A549 (cell line): ENCODE measurements at regions of chr17 and their contacts with region 1.

Region 1: GRCh38 chr17:39547713-39548478 is 59.8 kb downstream of the NEUROD2 start:
- DNase-seq: peak; percentile 69 to 75
- ATAC-seq: peak; percentile 91 to 92
- H3K4me3 ChIP-seq: no peak overlapping the region
- H3K27ac ChIP-seq: no peak overlapping the region
- H3K4me1 ChIP-seq: no peaks in the 10 kb centered on the region
- CTCF ChIP-seq: peak; percentile 99
- EP300 ChIP-seq: no peak
- POLR2A ChIP-seq: no peak
- RAD21 ChIP-seq: peak; percentile 87 to 88

Region 2: GRCh38 chr17:39209317-39210092 is 338.4 kb before region 1 on chr17:
- CTCF ChIA-PET with region 1: interaction called, 17 read pairs
- POLR2A ChIA-PET with region 1: no interaction called
- DNase-seq: no peak
- ATAC-seq: no peak
- H3K4me3 ChIP-seq: peak overlapping the region; percentile 25; the same call in 2 of the 3 replicates
- H3K27ac ChIP-seq: peak overlapping the region; percentile 64 to 73; a peak in 4 of 6 replicates
- H3K4me1 ChIP-seq: peaks cover 34% of the 10 kb centered on the region
- CTCF ChIP-seq: no peak
- EP300 ChIP-seq: no peak
- POLR2A ChIP-seq: no peak
- RAD21 ChIP-seq: no peak

Region 3: DNA sequence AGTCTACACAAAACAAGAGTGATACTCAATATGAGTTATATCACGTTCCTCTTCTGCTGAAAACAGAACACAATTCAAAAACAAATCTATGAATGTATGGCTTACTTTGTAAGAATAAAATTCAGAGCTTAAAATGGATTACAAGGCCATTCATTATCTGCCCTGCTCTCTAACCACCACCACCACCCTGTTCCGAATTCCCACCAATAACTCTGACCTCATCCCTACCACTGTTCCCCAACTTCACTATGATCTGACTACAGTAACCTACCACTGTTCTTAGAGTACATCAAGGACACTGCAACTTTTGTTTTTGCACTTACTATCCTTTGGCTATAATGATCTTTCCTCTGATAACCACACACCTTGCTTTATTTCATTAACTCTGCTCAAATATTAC is 167.8 kb before region 1 on chr17:
- CTCF ChIA-PET with region 1: no interaction called
- POLR2A ChIA-PET with region 1: no interaction called
- DNase-seq: no peak
- ATAC-seq: no peak
- H3K4me3 ChIP-seq: no peak overlapping the region
- H3K27ac ChIP-seq: no peak overlapping the region
- H3K4me1 ChIP-seq: no peaks in the 10 kb centered on the region; the same call in 2 of the 3 replicates
- CTCF ChIP-seq: no peak
- EP300 ChIP-seq: no peak
- POLR2A ChIP-seq: no peak
- RAD21 ChIP-seq: no peak

Region 4: DNA sequence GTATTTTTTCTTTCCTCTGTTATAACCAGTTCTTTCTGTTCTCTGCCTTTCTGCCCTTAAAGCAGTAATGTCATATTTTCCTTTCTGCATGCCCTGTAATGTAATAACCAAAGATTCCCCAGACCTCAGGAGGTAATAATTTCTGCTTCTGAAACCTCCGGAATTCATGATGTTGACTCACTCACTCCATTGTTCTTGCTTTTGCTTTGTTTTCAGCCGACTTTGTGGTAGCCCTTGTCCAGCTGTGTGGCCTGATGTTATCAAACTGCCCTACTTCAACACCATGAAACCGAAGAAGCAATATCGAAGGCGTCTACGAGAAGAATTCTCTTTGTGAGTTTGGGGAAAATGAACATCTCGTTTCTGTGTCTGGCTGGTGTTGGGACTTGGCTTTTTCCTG is 30.7 kb before region 1 on chr17:
- CTCF ChIA-PET with region 1: interaction called, 13 read pairs
- POLR2A ChIA-PET with region 1: no interaction called
- DNase-seq: no peak
- ATAC-seq: no peak
- H3K4me3 ChIP-seq: no peak overlapping the region
- H3K27ac ChIP-seq: no peak overlapping the region
- H3K4me1 ChIP-seq: no peaks in the 10 kb centered on the region
- CTCF ChIP-seq: no peak
- EP300 ChIP-seq: no peak
- POLR2A ChIP-seq: no peak
- RAD21 ChIP-seq: no peak

Region 5: DNA sequence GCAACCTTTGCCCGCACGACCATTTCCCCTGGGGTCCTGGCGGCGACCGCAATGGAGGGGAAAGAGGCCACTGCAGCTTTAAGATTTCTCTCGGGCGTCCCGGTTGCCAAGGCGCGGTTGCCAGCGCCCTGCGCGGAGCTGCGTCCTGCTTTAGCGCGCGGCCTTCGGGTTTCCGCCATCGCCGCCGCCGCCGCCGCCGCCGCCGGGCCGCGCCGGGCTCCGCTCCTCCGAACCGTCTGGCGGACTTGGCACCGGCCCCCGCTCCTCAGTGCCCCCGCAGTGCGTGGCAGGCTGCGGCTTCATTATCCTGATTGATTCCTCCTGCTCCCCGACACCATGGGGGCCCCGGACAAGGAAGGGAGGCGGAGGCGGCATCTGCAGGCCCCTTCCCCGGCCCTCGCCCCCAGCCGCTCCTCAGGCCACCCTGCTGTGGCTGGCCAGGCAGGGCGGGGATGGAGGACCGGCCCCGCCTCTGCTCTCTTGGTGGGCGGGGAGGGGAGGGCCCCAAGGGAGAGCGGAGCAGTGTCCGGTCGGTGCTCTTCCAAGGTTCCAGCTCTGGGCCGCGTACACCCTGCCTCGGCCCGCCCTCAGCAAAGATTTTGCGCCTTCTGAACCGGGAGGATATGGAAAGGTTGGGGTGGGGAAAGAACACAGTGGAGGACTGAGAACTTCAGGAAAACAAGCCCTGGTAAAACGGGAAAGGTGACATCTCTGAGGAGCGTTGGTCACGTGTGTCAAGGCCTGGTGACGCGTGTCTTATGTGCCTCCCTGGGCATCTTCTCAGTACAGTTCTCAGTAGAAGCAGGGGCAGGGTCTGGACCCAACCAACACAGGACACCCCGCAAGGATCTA is 25.8 kb after region 1 on chr17:
- CTCF ChIA-PET with region 1: interaction called, 145 read pairs
- POLR2A ChIA-PET with region 1: interaction called, 3 read pairs
- DNase-seq: peak; percentile 81 to 95
- ATAC-seq: peak; percentile 91 to 96
- H3K4me3 ChIP-seq: peak overlapping the region; percentile 57
- H3K27ac ChIP-seq: peak overlapping the region; percentile 74 to 90
- H3K4me1 ChIP-seq: peaks cover 5% of the 10 kb centered on the region; the same call in 2 of the 3 replicates
- CTCF ChIP-seq: no peak
- EP300 ChIP-seq: no peak
- POLR2A ChIP-seq: peak; percentile 44
- RAD21 ChIP-seq: no peak

Region 6: DNA sequence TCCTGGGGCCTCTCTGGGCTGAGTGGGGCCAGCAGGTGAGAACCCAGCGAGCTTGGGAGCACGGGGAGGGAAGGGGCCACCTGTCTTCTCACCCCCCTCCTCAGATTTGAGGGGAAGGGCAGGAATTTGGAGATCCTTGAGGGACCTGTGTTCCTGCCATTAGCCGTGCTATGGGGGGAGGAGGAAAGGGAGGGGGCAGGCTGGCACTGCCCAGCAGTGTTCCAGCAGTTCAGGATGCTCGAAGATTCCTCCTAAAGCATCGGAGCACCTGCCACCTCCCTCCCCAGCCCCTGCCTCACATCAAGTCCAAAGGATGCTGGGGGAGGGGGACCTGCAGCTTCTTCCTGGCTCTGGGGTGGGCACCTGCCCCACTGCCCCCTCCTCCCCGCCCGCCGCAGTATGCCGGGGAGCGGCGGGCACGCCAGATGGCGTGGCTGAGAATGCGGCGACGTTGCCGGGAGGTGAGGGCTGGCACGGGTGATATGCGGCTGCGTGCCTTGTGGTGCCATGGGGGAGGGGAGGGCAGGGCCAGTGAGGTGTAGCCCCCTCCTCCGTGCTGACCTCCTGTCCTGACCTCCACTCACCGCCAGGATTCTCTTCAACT is 64.5 kb after region 1 on chr17:
- CTCF ChIA-PET with region 1: interaction called, 533 read pairs
- POLR2A ChIA-PET with region 1: no interaction called
- DNase-seq: no peak
- ATAC-seq: no peak
- H3K4me3 ChIP-seq: no peak overlapping the region
- H3K27ac ChIP-seq: no peak overlapping the region
- H3K4me1 ChIP-seq: peaks cover 11% of the 10 kb centered on the region
- CTCF ChIP-seq: no peak
- EP300 ChIP-seq: no peak
- POLR2A ChIP-seq: no peak
- RAD21 ChIP-seq: no peak

Region 7: GRCh38 chr17:39754161-39754951 is 206.5 kb after region 1 on chr17:
- CTCF ChIA-PET with region 1: interaction called, 23 read pairs
- POLR2A ChIA-PET with region 1: no interaction called
- DNase-seq: peak; percentile 85 to 95
- ATAC-seq: peak; percentile 80 to 94
- H3K4me3 ChIP-seq: peak overlapping the region; percentile 69
- H3K27ac ChIP-seq: peak overlapping the region; percentile 83 to 96
- H3K4me1 ChIP-seq: peaks cover 21% of the 10 kb centered on the region
- CTCF ChIP-seq: peak; percentile 99
- EP300 ChIP-seq: no peak
- POLR2A ChIP-seq: peak; percentile 68
- RAD21 ChIP-seq: peak; percentile 92 to 100